Activated naive CD4-positive, alpha-beta T cell treated with anti-CD3 and anti-CD28 coated beads for 36 hours (primary cell): ENCODE measurements at regions of chr5 and their contacts with region 1.

Region 1: GRCh38 chr5:1004461-1005248 is 3.9 kb upstream of the NKD2 start:
- DNase-seq: peak; percentile 70
- H3K4me3 Mint-ChIP-seq: peak overlapping the region; percentile 50
- H3K27ac Mint-ChIP-seq: no peak overlapping the region
- H3K4me1 Mint-ChIP-seq: peaks cover 22% of the 10 kb centered on the region
- H3K27me3 Mint-ChIP-seq: peaks cover 31% of the 10 kb centered on the region

Region 2: DNA sequence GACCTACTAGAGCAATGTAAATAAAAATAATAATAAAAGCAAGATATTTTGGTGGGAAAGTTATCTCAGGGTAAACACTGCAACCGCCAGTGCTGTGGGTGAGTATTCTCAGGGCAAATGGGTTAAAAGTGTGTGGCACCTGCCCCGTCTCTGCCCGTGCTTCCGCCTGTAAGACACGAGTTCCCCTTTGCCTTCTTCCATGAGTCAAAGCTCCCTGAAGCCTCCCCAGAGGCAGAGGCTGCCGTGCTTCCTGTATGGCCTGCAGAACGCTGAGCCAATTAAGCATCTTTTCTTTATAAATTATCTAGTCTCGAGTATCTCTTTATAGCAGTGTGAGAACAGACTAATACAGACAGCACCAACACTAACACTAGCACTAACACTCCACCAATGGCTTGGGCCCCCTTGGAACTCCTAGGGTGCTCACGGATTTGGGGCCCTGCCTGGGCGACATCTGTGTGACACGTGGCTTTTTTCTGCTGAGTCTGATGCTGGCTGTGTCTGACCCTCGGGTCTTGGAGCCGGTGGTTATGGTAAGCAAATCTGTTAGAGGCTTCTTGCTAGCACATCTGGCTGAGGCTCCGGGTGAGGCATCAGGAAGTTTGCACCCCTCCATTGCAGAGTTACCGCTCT is 902.1 kb before region 1 on chr5:
- CTCF ChIA-PET with region 1: no interaction called
- intact Hi-C with region 1: no loop called
- DNase-seq: no peak
- H3K4me3 Mint-ChIP-seq: no peak overlapping the region
- H3K27ac Mint-ChIP-seq: no peak overlapping the region
- H3K4me1 Mint-ChIP-seq: no peaks in the 10 kb centered on the region
- H3K27me3 Mint-ChIP-seq: peaks cover 25% of the 10 kb centered on the region

Region 3: GRCh38 chr5:963673-964531 is 40.8 kb before region 1 on chr5:
- CTCF ChIA-PET with region 1: no interaction called
- intact Hi-C with region 1: loop called (anchors 2 kb)
- DNase-seq: peak; percentile 84
- H3K4me3 Mint-ChIP-seq: peak overlapping the region; percentile 42
- H3K27ac Mint-ChIP-seq: peak overlapping the region; percentile 69
- H3K4me1 Mint-ChIP-seq: peaks cover 20% of the 10 kb centered on the region
- H3K27me3 Mint-ChIP-seq: peaks cover 36% of the 10 kb centered on the region

Region 4: DNA sequence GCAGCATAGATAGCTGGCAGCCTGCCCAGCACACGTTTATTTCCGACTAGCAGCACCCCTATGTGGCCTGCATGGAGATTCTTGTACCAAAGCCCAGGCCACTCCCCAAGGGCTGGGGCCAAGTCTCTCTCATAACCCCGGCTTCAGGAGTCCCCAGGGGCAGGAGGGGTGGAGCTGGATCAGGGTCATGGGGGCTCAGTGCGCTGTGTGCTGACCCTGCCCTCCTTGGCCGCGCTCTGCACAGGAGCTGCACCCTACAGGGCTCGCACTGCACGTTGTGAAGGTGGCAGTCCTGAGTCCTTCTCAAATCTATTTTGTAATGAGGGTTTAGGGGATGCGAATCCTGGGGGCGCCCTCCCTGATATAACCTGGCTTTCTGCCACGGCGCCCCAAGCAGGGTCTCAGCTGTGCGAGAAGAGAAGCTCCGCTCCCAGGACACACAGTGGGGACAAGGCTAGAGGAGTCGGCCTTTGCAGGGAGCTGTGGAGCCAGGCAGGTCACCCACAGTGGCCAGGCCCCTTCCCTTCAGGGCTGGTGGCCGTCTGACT is 32.5 kb after region 1 on chr5:
- CTCF ChIA-PET with region 1: no interaction called
- intact Hi-C with region 1: no loop called
- DNase-seq: no peak
- H3K4me3 Mint-ChIP-seq: no peak overlapping the region
- H3K27ac Mint-ChIP-seq: no peak overlapping the region
- H3K4me1 Mint-ChIP-seq: peaks cover 3% of the 10 kb centered on the region
- H3K27me3 Mint-ChIP-seq: no peaks in the 10 kb centered on the region

Region 5: GRCh38 chr5:1140171-1140817 is 135.6 kb after region 1 on chr5:
- CTCF ChIA-PET with region 1: interaction called, 3 read pairs
- intact Hi-C with region 1: loop called (anchors 1 kb)
- DNase-seq: peak; percentile 86
- H3K4me3 Mint-ChIP-seq: no peak overlapping the region
- H3K27ac Mint-ChIP-seq: no peak overlapping the region
- H3K4me1 Mint-ChIP-seq: peaks cover 3% of the 10 kb centered on the region
- H3K27me3 Mint-ChIP-seq: peaks cover 5% of the 10 kb centered on the region